ENCODE measurements at regions of chr5 and their contacts with region 1.

Region 1: GRCh38 chr5:36875790-36876388 is 680 bp upstream of the NIPBL start:
- DNase-seq: peak; percentile 59 to 79 (median 71)
- ATAC-seq: peak; percentile 76
- H3K4me3 ChIP-seq: peak overlapping the region; percentile 98
- H3K4me3 Mint-ChIP-seq: peak overlapping the region; percentile 88 to 97 (median 94)
- H3K27ac ChIP-seq: peak overlapping the region; percentile 98
- H3K27ac Mint-ChIP-seq: peak overlapping the region; percentile 91 to 99 (median 96)
- H3K4me1 ChIP-seq: peaks cover 23 to 29% of the 10 kb centered on the region in 2 donors
- H3K4me1 Mint-ChIP-seq: peaks cover 23 to 71% (median 62%) of the 10 kb centered on the region in 7 donors
- H3K27me3 ChIP-seq: no peaks in the 10 kb centered on the region
- H3K27me3 Mint-ChIP-seq: no peaks in the 10 kb centered on the region

Region 2: DNA sequence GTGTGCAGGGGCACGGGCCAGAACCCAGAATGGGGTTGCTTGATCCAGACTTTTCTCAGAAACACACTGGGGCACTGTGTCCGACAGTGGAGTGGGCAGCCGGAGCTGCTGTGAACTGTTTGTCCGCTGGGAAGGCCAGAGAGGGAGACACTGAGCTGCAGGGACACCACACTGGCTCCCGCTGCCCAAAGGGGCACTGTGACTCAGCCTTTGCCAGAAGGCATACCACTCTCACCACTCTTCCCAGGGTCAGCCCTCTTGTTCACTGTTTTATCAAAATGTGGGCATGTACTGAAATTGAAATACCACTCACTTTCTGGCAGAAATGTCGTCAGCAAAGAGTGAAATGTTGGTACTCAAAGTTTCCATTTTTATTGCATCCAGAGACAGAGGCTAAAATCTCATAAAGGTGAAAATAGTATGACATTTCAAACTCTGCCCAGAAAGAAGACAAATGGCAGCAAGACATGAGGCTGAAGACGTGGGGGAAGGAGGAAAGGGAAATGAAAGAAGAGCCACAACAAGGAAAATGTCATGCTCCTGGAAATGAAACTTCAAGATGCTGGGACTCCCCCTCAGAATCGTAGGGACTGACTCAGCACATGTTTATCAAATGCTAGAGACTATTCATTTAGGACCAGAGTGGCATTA is 1023.7 kb before region 1 on chr5:
- CTCF ChIA-PET with region 1: no interaction called
- POLR2A ChIA-PET with region 1: interaction called, 3 read pairs
- intact Hi-C with region 1: loop called (anchors 5 to 10 kb)
- DNase-seq: peak in 6 of 9 donors; percentile 42 to 74 (median 56)
- ATAC-seq: no peak
- H3K4me3 ChIP-seq: peak overlapping the region; percentile 55
- H3K4me3 Mint-ChIP-seq: peak overlapping the region; percentile 85 to 100 (median 92)
- H3K27ac ChIP-seq: peak overlapping the region; percentile 98
- H3K27ac Mint-ChIP-seq: peak overlapping the region; percentile 97 to 100 (median 99)
- H3K4me1 ChIP-seq: peaks cover 52 to 56% of the 10 kb centered on the region in 2 donors
- H3K4me1 Mint-ChIP-seq: peaks cover 31 to 89% (median 72%) of the 10 kb centered on the region in 7 donors
- H3K27me3 ChIP-seq: no peaks in the 10 kb centered on the region
- H3K27me3 Mint-ChIP-seq: no peaks in the 10 kb centered on the region

Region 3: DNA sequence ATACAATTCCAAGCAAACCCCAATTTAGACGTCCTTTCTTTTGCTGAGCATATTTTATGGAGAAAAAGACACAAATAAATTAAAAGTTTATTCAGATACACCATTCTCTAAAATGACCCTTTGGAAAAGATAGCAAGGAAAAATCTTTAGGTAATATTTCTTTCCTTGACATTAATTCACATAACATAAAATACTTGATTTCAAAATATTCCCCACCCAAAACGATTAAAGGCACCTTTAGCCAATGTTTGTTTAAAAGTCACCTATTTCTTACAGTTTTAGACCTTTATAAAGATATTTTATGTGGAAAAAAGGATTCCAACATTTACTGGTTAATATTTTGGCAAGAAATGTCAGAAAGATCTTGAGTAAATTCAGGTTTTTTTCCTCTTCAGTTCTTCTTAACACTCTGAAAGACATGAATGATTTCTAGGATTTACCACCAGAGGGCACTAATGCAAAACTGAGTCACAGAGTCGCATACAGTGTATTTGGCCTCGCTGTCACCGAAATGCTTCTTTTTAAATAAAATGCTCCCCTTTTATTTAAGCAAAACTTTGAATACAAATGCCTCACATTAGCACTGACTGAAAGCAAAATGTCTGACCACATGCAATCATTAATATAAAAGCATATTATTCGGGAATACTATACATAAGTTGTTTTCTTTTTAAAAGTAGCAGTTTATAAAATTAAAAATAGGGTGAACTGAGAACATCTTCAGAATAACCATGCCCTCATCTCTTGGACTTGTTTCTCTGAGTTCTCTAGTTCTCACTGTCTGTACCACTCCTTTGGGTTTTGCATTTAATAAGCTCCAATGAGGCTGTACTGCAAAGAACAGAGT is 147.0 kb before region 1 on chr5:
- CTCF ChIA-PET with region 1: interaction called, 7 read pairs
- POLR2A ChIA-PET with region 1: interaction called, 7 read pairs
- intact Hi-C with region 1: loop called (anchors 1 to 2 kb)
- DNase-seq: peak in 7 of 9 donors; percentile 24 to 69 (median 58)
- ATAC-seq: peak; percentile 59
- H3K4me3 ChIP-seq: no peak overlapping the region
- H3K4me3 Mint-ChIP-seq: no peak overlapping the region
- H3K27ac ChIP-seq: no peak overlapping the region
- H3K27ac Mint-ChIP-seq: peak overlapping the region in 1 of 9 donors; percentile 14
- H3K4me1 ChIP-seq: peaks cover 0 to 2% of the 10 kb centered on the region in 2 donors
- H3K4me1 Mint-ChIP-seq: peaks cover 9 to 19% (median 15%) of the 10 kb centered on the region in 7 donors
- H3K27me3 ChIP-seq: no peaks in the 10 kb centered on the region
- H3K27me3 Mint-ChIP-seq: peaks cover 0 to 11% (median 4%) of the 10 kb centered on the region in 5 donors

Region 4: DNA sequence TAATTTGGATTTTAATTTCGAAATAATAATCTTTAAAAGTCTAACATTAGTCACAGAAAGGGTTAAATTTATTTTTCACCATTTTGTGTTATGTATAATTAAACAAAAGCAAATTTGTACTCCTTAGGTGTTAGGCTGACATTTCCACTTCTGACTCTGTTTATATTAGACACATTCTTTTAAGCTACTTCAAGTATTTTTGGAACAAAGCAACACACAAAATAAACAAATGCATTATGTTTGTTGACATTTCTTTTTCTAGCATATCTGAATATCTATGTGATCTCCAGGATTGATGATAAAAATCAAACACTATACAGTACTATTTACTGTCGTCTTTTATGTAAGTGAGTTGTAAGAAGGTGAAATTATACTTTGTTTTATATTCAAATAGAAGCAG is 43.6 kb before region 1 on chr5:
- CTCF ChIA-PET with region 1: no interaction called
- POLR2A ChIA-PET with region 1: no interaction called
- intact Hi-C with region 1: no loop called
- DNase-seq: no peak
- ATAC-seq: no peak
- H3K4me3 ChIP-seq: no peak overlapping the region
- H3K4me3 Mint-ChIP-seq: no peak overlapping the region
- H3K27ac ChIP-seq: no peak overlapping the region
- H3K27ac Mint-ChIP-seq: no peak overlapping the region
- H3K4me1 ChIP-seq: no peaks in the 10 kb centered on the region
- H3K4me1 Mint-ChIP-seq: no peaks in the 10 kb centered on the region
- H3K27me3 ChIP-seq: no peaks in the 10 kb centered on the region
- H3K27me3 Mint-ChIP-seq: peaks cover 3 to 24% (median 11%) of the 10 kb centered on the region in 5 donors

Region 5: DNA sequence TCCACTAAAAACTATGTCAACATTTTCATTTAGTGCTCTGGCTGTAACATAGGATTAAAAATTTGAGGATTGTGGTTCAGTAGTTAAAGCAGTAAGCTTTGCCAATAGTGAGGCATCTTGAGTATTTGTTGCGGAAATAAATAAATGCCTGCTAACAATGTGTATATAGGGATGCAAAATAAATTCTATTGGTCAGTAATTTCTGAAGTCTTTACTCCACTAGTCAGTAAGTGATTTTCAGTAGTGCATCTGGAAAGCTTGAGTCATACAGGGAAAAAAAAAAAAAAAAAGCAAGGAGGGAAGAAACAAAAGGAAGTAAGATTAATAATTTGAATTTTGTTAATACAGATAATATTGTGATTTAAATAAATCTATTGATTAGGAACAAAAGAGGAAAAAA is 21.7 kb after region 1 on chr5:
- CTCF ChIA-PET with region 1: interaction called, 4 read pairs
- POLR2A ChIA-PET with region 1: interaction called, 8 read pairs
- intact Hi-C with region 1: loop called in 1 of 2 experiments (anchors 2 kb)
- DNase-seq: no peak
- ATAC-seq: no peak
- H3K4me3 ChIP-seq: no peak overlapping the region
- H3K4me3 Mint-ChIP-seq: peak overlapping the region in 7 of 10 donors; percentile 7 to 64 (median 30)
- H3K27ac ChIP-seq: no peak overlapping the region
- H3K27ac Mint-ChIP-seq: peak overlapping the region in 1 of 9 donors; percentile 2
- H3K4me1 ChIP-seq: peaks cover 8 to 12% of the 10 kb centered on the region in 2 donors
- H3K4me1 Mint-ChIP-seq: peaks cover 37 to 90% (median 81%) of the 10 kb centered on the region in 7 donors
- H3K27me3 ChIP-seq: no peaks in the 10 kb centered on the region
- H3K27me3 Mint-ChIP-seq: no peaks in the 10 kb centered on the region

Region 6: DNA sequence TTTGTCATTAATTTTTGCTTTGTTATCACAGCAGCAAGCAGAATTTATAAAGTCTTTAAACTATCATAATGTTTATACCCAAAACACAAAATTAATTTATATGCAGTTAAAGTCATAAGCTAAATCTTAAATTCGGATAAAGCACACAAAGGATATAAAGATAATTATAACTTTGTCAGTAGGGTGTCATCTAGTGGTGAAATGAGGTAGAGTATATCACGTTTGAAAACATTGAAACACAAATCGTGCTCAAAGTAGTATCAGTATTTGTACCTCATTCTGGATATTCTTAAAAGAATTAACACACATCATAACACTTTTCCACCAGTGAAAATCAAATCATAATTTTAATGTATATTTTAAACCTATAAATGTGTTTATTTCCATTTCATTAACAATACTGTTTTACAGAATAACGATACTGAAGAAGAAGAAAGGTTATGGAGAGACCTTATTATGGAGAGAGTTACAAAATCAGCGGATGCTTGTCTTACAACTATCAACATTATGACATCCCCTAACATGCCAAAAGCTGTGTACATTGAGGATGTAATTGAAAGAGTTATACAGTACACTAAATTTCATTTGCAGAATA is 130.2 kb after region 1 on chr5:
- CTCF ChIA-PET with region 1: no interaction called
- POLR2A ChIA-PET with region 1: no interaction called
- intact Hi-C with region 1: loop called in 1 of 2 experiments (anchors 2 kb)
- DNase-seq: peak in 6 of 9 donors; percentile 1 to 25 (median 13)
- ATAC-seq: peak; percentile 54
- H3K4me3 ChIP-seq: no peak overlapping the region
- H3K4me3 Mint-ChIP-seq: no peak overlapping the region
- H3K27ac ChIP-seq: no peak overlapping the region
- H3K27ac Mint-ChIP-seq: peak overlapping the region in 1 of 9 donors; percentile 6
- H3K4me1 ChIP-seq: no peaks in the 10 kb centered on the region
- H3K4me1 Mint-ChIP-seq: no peaks in the 10 kb centered on the region
- H3K27me3 ChIP-seq: no peaks in the 10 kb centered on the region
- H3K27me3 Mint-ChIP-seq: no peaks in the 10 kb centered on the region

Region 7: DNA sequence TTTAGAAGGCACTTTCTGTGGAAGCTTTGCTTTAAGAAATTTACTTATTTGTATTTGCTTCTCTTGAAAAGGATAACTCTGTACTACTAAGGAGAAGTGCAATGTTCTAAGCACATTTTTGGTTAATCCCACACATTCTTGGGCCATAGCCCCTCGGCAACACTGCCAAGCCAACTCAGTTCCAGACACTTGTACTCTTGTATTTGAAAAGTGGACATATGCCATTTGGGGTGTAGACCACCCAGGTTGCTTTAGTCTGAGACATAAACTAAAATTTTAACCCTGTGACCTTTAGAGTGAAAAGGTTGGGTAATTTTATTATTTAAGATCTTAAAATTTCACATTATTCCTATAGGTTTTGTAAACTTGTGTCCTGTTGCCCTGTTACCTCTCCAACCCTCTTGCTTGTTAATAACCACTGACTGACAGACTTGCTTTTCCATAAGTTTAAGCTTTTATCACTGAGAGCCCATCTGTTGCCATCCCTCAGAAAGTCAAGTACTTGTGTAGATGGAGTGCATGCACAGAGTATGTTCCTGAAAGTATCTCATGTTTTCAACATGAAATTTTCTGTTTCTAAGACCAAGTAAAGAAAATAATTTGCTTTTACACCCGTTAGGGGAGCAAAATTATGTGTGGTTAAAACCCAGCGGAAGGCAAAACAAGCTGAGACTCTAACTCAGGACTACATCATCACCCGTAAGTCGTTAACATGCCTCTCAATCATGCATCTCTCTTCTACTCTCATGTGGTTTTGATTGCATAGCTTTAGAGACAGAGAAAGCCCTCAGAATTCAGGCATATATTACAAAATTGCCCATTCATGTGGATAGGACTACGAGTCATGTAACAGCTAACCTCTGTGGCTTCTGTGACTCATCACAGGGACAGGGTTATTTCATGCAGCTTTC is 846.6 kb after region 1 on chr5:
- CTCF ChIA-PET with region 1: no interaction called
- POLR2A ChIA-PET with region 1: no interaction called
- intact Hi-C with region 1: loop called in 1 of 2 experiments (anchors 5 kb)
- DNase-seq: no peak
- ATAC-seq: peak; percentile 72
- H3K4me3 ChIP-seq: no peak overlapping the region
- H3K4me3 Mint-ChIP-seq: peak overlapping the region in 1 of 10 donors; percentile 67
- H3K27ac ChIP-seq: no peak overlapping the region
- H3K27ac Mint-ChIP-seq: peak overlapping the region in 2 of 9 donors; percentile 32 to 85
- H3K4me1 ChIP-seq: peaks cover 0 to 9% of the 10 kb centered on the region in 2 donors
- H3K4me1 Mint-ChIP-seq: peaks cover 0 to 27% (median 0%) of the 10 kb centered on the region in 7 donors
- H3K27me3 ChIP-seq: no peaks in the 10 kb centered on the region
- H3K27me3 Mint-ChIP-seq: no peaks in the 10 kb centered on the region

Region 8: DNA sequence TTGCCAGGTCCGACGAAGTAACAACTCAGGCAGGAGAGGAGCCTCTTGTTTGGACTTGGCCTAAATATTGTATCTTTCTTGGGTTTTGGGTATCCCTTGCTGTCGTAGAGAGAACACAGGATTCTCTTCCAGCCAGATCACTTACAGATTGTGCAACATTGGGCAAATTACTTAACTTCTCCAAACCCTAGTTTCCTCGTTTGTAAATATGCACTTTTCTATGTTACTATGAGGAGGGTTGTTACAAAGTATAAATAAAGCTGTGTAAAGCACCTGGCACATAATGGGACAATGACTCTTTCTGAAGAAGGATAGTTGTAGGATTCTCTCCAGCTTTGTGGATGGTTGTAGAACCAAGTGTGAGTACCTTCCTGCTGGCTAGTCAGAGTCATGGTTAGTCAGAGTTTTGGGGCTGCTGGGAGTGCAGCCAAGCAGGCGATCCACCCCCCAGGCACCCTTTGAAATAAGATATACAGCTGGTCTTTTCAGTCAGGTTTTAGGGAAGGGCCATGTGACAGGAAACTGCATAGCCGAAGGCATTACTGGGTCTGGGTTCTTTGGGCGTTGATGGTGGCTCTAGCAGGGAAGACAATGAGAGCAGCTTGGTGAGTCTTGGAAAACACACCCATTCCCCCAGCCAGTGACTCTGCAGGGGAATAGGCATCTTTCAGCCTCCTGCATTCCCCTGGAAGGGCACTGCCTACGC is 1013.9 kb after region 1 on chr5:
- CTCF ChIA-PET with region 1: no interaction called
- POLR2A ChIA-PET with region 1: no interaction called
- intact Hi-C with region 1: no loop called
- DNase-seq: no peak
- ATAC-seq: no peak
- H3K4me3 ChIP-seq: no peak overlapping the region
- H3K4me3 Mint-ChIP-seq: no peak overlapping the region
- H3K27ac ChIP-seq: no peak overlapping the region
- H3K27ac Mint-ChIP-seq: no peak overlapping the region
- H3K4me1 ChIP-seq: no peaks in the 10 kb centered on the region
- H3K4me1 Mint-ChIP-seq: no peaks in the 10 kb centered on the region
- H3K27me3 ChIP-seq: no peaks in the 10 kb centered on the region
- H3K27me3 Mint-ChIP-seq: peaks cover 0 to 24% (median 14%) of the 10 kb centered on the region in 5 donors